ENCODE measurements at regions of chr7 and their contacts with region 1.

Region 1: DNA sequence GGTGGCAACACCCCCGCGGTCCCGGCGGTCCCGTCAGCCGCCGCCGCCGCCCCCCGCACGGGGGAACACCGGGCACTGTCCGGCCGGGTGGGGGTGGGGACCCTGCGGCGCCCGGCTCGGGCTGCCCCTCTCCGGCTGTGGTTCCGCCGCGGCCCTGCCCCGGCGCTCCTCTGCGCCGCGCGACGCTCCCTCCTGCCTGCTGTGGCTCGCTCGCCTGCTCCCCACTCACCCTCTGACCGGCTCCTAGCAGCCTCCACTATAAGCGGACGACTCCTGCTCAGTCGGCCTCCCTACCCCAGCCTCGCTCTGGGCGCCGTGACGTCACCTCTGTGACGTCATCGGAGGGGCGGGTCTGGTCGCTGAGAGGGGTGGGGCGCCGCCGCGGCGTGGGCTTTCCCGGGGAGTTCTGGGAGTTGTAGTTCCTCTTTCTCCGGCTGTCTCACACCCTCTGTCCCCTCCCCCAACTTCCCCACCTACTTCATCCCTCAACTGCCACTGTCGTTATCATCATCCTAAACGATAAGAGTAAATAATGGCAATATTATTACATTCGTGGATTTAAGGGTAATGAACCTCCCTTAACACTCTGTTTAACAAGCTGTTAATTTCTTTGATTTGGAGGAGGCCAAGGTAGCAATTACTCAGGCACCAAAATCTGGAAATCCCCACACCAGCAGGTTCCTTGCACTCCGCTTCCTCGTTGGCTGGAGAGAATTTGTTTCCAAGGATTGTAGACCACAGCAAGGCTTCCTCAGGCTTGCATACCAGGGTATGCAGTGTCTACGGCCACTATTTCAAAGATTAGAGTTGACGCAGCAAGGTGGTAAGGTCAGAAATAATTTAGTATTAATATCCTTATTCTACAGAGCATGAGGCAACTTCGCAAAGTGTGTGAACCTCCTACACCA is at the start of gene UBE2H:
- DNase-seq: peak; percentile 95
- H3K4me3 Mint-ChIP-seq: no peak within 1 kb of the TSS
- H3K27ac Mint-ChIP-seq: peak within 1 kb of the TSS; percentile 100
- H3K4me1 Mint-ChIP-seq: peaks cover 17% of the 10 kb centered on the region
- H3K27me3 Mint-ChIP-seq: peaks cover 5% of the 10 kb centered on the region
- total RNA-seq, gene UBE2H: 21.7 and 24.2 TPM in 2 replicates

Region 2: GRCh38 chr7:129502376-129502776 is 450.5 kb before region 1 on chr7 and contains the start of gene SMKR1:
- intact Hi-C with region 1: loop called (anchors 5 kb)
- DNase-seq: peak; percentile 98
- H3K4me3 Mint-ChIP-seq: peak within 1 kb of the TSS; percentile 84
- H3K27ac Mint-ChIP-seq: peak within 1 kb of the TSS; percentile 84
- H3K4me1 Mint-ChIP-seq: peaks cover 22% of the 10 kb centered on the region
- H3K27me3 Mint-ChIP-seq: peaks cover 9% of the 10 kb centered on the region
- total RNA-seq, gene SMKR1: 5.9 and 6.1 TPM in 2 replicates

Region 3: GRCh38 chr7:129611246-129612111 is 341.4 kb before region 1 on chr7 and contains the start of gene NRF1:
- intact Hi-C with region 1: loop called (anchors 5 kb)
- DNase-seq: peak; percentile 98
- H3K4me3 Mint-ChIP-seq: peak within 1 kb of the TSS; percentile 93
- H3K27ac Mint-ChIP-seq: peak within 1 kb of the TSS; percentile 95
- H3K4me1 Mint-ChIP-seq: peaks cover 46% of the 10 kb centered on the region
- H3K27me3 Mint-ChIP-seq: no peaks in the 10 kb centered on the region
- total RNA-seq, gene NRF1: 22.3 and 23.2 TPM in 2 replicates

Region 4: GRCh38 chr7:129845178-129845971 is 107.5 kb before region 1 on chr7:
- intact Hi-C with region 1: no loop called
- DNase-seq: no peak
- H3K4me3 Mint-ChIP-seq: no peak overlapping the region
- H3K27ac Mint-ChIP-seq: peak overlapping the region; percentile 36
- H3K4me1 Mint-ChIP-seq: peaks cover 25% of the 10 kb centered on the region
- H3K27me3 Mint-ChIP-seq: no peaks in the 10 kb centered on the region

Region 5: DNA sequence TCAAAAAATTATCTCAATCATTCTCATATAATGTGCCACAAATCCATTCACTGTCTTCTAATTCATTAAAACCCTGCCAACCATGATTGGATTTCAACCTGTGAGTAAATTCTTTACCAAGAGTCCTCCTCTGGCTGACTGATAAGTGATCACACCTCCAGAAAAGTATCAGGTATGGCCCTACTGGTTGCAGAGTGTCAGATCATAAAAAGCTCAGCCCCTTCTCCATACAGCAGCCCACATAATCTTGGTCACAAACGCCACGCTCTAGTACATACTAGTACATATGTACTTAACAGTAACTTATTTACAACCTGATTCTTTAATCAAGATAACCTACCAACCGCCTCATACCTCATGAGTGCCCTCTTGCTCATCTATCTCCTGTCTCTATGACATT is 26.3 kb before region 1 on chr7:
- intact Hi-C with region 1: no loop called
- DNase-seq: no peak
- H3K4me3 Mint-ChIP-seq: no peak overlapping the region
- H3K27ac Mint-ChIP-seq: no peak overlapping the region
- H3K4me1 Mint-ChIP-seq: peaks cover 5% of the 10 kb centered on the region
- H3K27me3 Mint-ChIP-seq: no peaks in the 10 kb centered on the region

Region 6: GRCh38 chr7:129968592-129969383 is 15.9 kb after region 1 on chr7:
- intact Hi-C with region 1: no loop called
- DNase-seq: no peak
- H3K4me3 Mint-ChIP-seq: no peak overlapping the region
- H3K27ac Mint-ChIP-seq: no peak overlapping the region
- H3K4me1 Mint-ChIP-seq: no peaks in the 10 kb centered on the region
- H3K27me3 Mint-ChIP-seq: no peaks in the 10 kb centered on the region

Region 7: GRCh38 chr7:130010689-130011412 is 57.9 kb after region 1 on chr7:
- intact Hi-C with region 1: loop called (anchors 2 kb)
- DNase-seq: peak; percentile 96
- H3K4me3 Mint-ChIP-seq: no peak overlapping the region
- H3K27ac Mint-ChIP-seq: peak overlapping the region; percentile 57
- H3K4me1 Mint-ChIP-seq: peaks cover 3% of the 10 kb centered on the region
- H3K27me3 Mint-ChIP-seq: no peaks in the 10 kb centered on the region

Region 8: DNA sequence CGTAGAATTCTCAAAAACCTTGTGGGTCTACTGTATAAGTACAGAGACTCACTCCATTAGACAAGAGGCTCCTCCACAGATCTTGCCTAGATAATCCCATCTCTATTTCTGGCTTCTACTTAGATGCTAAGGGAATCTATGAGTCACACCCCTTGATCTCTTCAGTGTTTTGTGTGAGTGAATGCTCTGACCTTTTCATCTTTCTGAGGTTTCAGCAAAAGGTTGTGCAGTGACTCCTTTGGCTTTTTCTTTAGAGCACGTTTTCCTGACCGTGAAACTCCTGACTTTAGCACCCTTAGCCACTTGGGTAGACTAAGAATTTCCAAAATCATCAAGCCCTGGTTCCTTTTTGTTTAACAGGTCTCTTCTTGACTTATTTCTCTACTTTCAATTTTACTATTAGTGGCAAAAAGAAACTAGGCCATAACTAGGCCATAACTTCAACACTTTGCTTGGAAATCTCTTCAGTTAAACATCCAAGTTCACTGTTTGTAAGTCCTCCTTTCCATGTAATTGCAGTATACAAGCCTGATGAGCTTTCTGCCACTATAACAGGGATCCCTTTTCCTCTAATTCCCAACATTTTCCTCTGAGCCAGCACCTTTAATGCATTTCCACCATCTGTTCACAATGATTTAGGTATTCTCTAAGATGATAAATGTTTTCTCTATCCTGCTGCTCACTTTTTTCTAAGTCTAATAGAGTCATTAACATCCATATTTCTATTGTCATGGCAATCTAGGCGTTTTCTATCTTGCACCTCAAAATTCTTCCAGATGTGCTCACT is 696.3 kb after region 1 on chr7:
- intact Hi-C with region 1: loop called (anchors 5 kb)
- DNase-seq: peak; percentile 67
- H3K4me3 Mint-ChIP-seq: peak overlapping the region; percentile 50
- H3K27ac Mint-ChIP-seq: peak overlapping the region; percentile 86
- H3K4me1 Mint-ChIP-seq: peaks cover 35% of the 10 kb centered on the region
- H3K27me3 Mint-ChIP-seq: no peaks in the 10 kb centered on the region